ENCODE measurements at regions of chr3 and their contacts with region 1.

Region 1: DNA sequence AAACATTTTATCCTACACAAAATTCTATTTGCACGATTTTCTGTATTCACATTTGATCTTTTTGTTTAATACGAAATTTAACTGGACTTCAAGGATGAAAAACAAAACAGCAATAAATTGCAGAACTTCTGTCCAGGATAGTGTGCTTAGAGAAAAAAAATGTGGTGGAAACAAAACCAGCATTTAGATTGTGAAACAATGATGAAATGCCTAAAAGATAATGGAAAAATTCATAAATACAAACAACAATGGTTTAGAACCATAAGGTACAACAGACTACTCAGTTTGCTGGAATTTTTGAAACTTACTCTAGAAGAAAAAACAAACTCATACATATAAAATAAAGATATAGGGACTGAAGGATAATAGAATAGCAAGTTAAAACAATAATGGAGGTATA is 234.0 kb downstream of the BCHE start:
- H3K4me3 ChIP-seq: no peak overlapping the region
- H3K27ac ChIP-seq: no peak overlapping the region
- H3K4me1 ChIP-seq: no peaks in the 10 kb centered on the region
- CTCF ChIP-seq: no peak

Region 2: DNA sequence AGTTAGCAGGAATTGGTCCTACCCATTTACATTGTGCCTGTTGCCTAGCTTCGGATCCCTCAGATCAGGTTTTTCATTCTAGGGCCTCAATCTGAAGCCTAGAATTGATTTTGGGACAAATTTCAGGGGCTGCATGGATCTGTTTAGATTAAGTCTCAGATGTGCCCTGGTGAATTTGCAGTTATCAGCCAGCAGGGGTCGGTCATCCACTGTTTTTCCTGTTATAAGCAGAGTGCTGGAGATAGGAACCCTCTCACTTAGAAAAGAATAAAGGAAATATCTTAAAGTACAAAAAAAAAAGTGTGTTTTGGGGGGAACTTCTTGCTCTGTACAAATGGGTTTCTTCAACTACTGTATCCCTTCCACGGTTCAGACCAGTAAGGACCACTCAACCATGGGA is 21.6 kb after region 1 on chr3:
- CTCF ChIA-PET with region 1: no interaction called
- POLR2A ChIA-PET with region 1: no interaction called
- H3K4me3 ChIP-seq: no peak overlapping the region
- H3K27ac ChIP-seq: no peak overlapping the region
- H3K4me1 ChIP-seq: no peaks in the 10 kb centered on the region
- CTCF ChIP-seq: no peak

Region 3: GRCh38 chr3:167302678-167303077 is 1699.5 kb after region 1 on chr3:
- CTCF ChIA-PET with region 1: interaction called, 10 read pairs
- POLR2A ChIA-PET with region 1: no interaction called
- H3K4me3 ChIP-seq: no peak overlapping the region
- H3K27ac ChIP-seq: no peak overlapping the region
- H3K4me1 ChIP-seq: no peaks in the 10 kb centered on the region
- CTCF ChIP-seq: no peak

Measured in HEK293 (cell line).